ENCODE measurements at regions of chr7 and their contacts with region 1.

Region 1: DNA sequence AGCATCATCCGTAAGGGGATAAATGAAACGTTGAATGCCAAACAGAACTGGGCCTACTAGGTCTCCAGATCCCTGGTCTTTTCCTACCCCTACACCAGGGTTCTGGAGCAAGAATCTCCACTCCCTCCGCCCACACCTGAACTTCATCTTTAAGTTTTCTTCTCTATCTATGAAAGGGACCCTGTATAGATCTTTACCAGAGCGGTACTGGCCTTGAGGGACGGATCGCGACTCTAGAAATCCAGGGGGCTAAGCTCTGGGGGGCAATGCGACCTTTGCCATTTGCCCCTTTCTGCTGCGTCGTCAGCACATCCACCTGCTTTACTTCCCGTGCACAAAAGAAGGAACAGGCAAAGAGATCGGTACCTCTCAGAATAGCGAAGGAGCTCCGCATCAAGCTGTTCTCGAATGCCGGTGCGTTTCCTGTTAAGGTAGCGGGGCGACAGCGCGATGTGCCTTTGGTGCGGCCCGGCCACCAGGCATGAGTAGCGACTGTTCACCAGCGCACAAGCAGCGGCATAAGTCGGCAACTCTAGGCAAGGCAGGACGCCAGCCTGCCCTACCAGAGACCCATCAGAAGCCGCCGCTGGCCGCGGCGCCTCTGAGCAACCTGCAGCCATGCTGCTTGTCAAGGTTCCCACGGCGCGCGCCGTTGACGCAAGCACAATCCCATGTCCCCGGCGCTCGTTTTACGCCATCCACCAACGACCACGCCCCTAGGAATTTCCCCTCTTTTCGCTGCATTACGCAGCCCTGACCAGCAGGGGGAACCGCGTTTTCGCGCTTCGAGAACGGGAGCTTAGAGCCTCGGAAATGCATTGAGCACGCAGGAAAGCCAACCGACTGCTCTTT is at the start of gene POLR1F:
- DNase-seq: peak; percentile 83
- ATAC-seq: peak; percentile 98
- H3K4me3 Mint-ChIP-seq: peak within 1 kb of the TSS; percentile 97
- H3K27ac Mint-ChIP-seq: peak within 1 kb of the TSS; percentile 88
- H3K4me1 Mint-ChIP-seq: peaks cover 43% of the 10 kb centered on the region
- H3K27me3 Mint-ChIP-seq: peaks cover 4% of the 10 kb centered on the region
- CTCF ChIP-seq: no peak
- total RNA-seq, gene POLR1F: 19.9 and 20.0 TPM in 2 replicates

Region 2: GRCh38 chr7:19480383-19480782 is 228.2 kb before region 1 on chr7:
- CTCF ChIA-PET with region 1: no interaction called
- POLR2A ChIA-PET with region 1: no interaction called
- intact Hi-C with region 1: no loop called
- DNase-seq: no peak
- ATAC-seq: no peak
- H3K4me3 Mint-ChIP-seq: no peak overlapping the region
- H3K27ac Mint-ChIP-seq: no peak overlapping the region
- H3K4me1 Mint-ChIP-seq: no peaks in the 10 kb centered on the region
- H3K27me3 Mint-ChIP-seq: no peaks in the 10 kb centered on the region
- CTCF ChIP-seq: no peak

Region 3: DNA sequence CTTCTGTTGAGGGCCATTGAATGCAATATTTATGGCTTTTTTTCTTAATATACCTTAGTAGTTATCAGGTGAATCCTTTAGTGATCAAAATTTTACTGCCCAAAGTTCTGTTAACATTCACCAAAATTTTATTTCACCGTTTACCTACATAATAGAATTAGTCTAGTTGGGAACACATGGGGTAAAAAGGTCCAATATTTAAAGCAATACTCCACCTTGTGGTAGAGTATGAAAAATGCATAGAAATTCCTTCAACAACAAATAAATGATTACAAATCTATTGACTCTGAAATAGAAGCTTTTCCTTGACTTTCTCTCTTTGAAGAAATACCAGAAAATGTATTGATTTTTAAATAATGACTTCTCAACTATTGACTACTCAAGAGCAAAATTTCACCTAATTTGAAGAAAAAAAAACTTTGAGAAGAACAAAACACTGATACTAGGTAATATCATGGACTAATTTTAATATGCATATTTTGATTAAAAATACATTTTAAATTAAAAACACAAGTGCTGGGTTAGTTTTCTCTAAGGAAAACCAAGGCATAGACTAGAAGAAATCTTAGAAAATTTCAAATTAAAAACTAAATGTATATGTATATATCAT is 43.1 kb before region 1 on chr7:
- CTCF ChIA-PET with region 1: no interaction called
- POLR2A ChIA-PET with region 1: no interaction called
- intact Hi-C with region 1: loop called (anchors 1 kb)
- DNase-seq: no peak
- ATAC-seq: peak; percentile 32
- H3K4me3 Mint-ChIP-seq: no peak overlapping the region
- H3K27ac Mint-ChIP-seq: no peak overlapping the region
- H3K4me1 Mint-ChIP-seq: peaks cover 20% of the 10 kb centered on the region
- H3K27me3 Mint-ChIP-seq: no peaks in the 10 kb centered on the region
- CTCF ChIP-seq: no peak

Region 4: GRCh38 chr7:19692111-19692828 is 16.4 kb before region 1 on chr7:
- CTCF ChIA-PET with region 1: no interaction called
- POLR2A ChIA-PET with region 1: no interaction called
- intact Hi-C with region 1: no loop called
- DNase-seq: no peak
- ATAC-seq: no peak
- H3K4me3 Mint-ChIP-seq: no peak overlapping the region
- H3K27ac Mint-ChIP-seq: no peak overlapping the region
- H3K4me1 Mint-ChIP-seq: no peaks in the 10 kb centered on the region
- H3K27me3 Mint-ChIP-seq: peaks cover 3% of the 10 kb centered on the region
- CTCF ChIP-seq: no peak

Region 5: DNA sequence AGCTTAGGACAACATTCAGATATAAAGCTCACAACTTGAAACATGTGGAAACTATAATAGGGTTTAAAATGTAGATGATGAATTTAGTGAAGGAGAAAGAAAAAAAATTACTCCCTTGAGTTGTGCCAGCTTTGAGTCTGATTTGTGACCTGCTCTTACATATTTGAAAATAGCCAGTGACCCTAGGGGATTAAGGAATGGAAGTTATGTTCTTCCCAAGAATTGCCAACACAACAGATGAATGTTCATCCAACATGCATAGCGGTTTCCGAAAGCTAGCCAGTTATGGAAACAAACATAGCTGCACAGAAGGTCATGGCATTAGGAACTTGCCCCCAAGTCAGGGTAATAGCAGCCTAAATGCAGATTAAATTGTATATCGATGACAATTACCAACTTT is 54.0 kb after region 1 on chr7:
- CTCF ChIA-PET with region 1: no interaction called
- POLR2A ChIA-PET with region 1: no interaction called
- intact Hi-C with region 1: no loop called
- DNase-seq: no peak
- ATAC-seq: no peak
- H3K4me3 Mint-ChIP-seq: no peak overlapping the region
- H3K27ac Mint-ChIP-seq: no peak overlapping the region
- H3K4me1 Mint-ChIP-seq: no peaks in the 10 kb centered on the region
- H3K27me3 Mint-ChIP-seq: peaks cover 4% of the 10 kb centered on the region
- CTCF ChIP-seq: no peak

Region 6: DNA sequence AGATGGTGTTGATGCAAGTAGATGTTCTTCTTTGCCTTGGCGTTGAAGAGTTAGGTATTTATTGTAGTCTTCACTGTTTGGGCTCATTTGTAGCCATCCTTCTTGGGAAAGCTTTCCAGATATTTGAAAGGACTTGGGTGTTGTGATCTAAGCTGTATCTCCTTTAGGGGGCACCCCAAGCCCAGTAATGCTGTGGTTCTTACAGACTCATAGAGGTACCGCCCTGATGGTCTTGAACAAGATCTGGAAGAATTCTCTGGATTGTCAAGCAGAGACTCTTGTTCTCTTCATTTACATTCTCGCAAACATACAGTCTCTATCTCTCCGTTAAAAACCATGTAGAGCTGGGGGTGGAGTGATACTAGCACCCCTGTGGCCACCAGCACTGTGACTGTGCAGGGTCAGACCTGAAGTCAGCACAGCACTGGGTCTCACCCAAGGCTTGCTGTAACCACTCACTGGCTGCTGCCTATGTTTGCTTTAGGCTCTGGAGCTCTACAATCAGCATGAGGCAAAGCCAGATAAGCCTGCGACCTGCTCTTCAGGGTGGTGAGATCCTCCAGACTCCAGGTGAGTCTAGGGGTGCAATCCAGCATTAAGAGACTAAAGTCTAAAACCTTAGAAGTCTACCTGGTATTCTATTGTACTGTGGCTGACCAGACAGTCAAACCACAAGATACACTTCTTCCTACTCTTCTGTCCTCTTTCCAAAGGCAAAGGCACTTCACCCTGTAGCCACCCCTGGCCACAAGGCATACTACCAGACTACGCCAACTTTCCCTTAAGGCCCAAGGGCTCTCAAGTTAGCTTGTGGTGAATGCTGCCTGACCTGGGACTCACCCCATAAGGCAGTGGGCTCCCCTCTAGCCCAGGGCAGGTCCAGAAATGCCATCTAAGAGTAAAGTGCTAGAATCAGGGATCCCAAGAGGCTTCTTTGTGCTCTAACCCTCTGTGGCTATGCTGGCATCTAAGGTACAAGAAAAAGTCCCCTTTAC is 274.5 kb after region 1 on chr7:
- CTCF ChIA-PET with region 1: interaction called, 14 read pairs
- POLR2A ChIA-PET with region 1: no interaction called
- intact Hi-C with region 1: loop called (anchors 1 kb)
- DNase-seq: no peak
- ATAC-seq: peak; percentile 50
- H3K4me3 Mint-ChIP-seq: no peak overlapping the region
- H3K27ac Mint-ChIP-seq: no peak overlapping the region
- H3K4me1 Mint-ChIP-seq: no peaks in the 10 kb centered on the region
- H3K27me3 Mint-ChIP-seq: no peaks in the 10 kb centered on the region
- CTCF ChIP-seq: no peak

Region 7: DNA sequence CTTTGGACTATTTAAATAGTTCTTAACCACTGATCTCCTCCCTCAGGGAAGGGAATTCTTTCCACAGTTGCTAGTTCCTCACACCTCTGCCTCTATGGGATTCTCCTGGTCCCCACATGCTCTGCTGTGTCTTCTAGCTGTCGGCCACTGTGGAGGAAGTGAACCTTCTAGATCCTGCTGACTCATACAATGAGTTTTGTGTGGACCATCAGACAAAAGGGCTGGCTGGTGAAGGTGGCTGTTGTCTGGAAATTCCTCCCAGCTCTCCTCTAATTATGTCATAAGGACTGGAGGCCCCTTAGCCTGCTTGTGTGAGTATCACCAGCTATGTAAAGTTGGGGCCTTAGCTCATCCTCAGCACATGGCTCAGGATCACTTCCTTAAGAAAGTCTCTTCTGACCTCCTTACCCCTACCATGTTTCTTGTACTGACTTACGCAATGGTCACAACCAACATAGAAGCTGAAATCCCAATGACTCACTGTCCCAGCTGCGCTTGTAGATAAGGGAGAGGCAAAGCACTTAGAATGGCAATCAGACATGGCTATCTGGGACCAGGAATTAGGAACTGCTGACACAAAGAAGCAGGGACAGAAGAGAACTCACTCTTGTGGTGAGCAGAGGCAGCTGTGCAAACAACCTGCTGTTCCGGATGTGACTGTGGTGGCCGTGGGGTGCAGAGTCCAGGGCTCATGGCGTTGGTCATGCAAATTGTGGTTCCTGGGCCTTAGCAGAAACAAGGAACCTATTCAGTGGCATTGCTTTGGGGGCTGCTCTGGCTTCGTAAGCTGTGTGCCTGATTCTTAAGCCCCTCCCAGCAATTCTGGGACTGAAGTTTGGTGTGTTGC is 511.0 kb after region 1 on chr7:
- CTCF ChIA-PET with region 1: interaction called, 3 read pairs
- POLR2A ChIA-PET with region 1: no interaction called
- intact Hi-C with region 1: loop called (anchors 5 kb)
- DNase-seq: peak; percentile 65
- ATAC-seq: peak; percentile 73
- H3K4me3 Mint-ChIP-seq: peak overlapping the region; percentile 33
- H3K27ac Mint-ChIP-seq: peak overlapping the region; percentile 95
- H3K4me1 Mint-ChIP-seq: peaks cover 73% of the 10 kb centered on the region
- H3K27me3 Mint-ChIP-seq: no peaks in the 10 kb centered on the region
- CTCF ChIP-seq: no peak

Region 8: GRCh38 chr7:20310963-20311742 is 602.5 kb after region 1 on chr7:
- CTCF ChIA-PET with region 1: interaction called, 13 read pairs
- POLR2A ChIA-PET with region 1: no interaction called
- intact Hi-C with region 1: loop called (anchors 1 kb)
- DNase-seq: no peak
- ATAC-seq: peak; percentile 37
- H3K4me3 Mint-ChIP-seq: no peak overlapping the region
- H3K27ac Mint-ChIP-seq: peak overlapping the region; percentile 64
- H3K4me1 Mint-ChIP-seq: peaks cover 16% of the 10 kb centered on the region
- H3K27me3 Mint-ChIP-seq: no peaks in the 10 kb centered on the region
- CTCF ChIP-seq: peak; percentile 31

Region 9: DNA sequence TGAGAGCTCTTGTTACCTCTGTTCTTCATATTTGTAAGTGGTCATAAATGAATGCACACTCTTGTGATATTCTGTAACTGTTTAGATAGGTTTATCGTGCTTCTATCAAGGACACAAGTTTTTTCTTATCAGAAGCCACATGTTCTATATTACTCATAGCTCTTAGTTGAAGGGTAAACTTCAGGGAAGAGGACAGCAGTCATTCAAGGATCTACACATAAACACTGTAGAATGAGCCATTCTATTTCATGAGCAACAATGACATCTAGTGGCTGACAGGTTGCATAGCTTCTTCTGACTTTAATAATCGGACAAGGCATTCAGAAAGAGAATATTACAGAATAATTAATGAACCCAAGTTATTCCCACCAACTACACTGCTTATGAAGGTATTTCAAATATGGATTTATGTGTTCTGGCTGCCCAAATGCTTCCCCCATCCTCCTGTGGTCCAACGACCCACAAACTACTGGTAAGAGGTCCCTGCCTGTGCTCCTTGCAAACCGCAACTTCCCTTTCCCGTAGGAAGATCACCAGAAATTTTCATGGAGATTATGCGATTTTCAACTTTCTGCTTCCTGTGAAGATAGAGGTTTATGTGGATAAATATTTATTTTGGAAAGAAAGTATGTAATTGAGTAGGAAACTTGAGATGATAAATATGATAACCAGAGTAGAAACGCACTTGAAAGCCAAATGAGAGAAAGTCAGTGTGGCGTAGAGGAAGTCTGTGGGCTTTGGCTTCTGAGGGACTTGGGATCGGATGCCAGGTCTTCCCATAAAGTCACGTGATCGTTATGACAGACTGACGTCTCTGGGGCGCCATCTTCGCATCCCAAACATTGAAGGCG is 890.1 kb after region 1 on chr7:
- CTCF ChIA-PET with region 1: interaction called, 223 read pairs
- POLR2A ChIA-PET with region 1: interaction called, 6 read pairs
- intact Hi-C with region 1: loop called (anchors 1 kb)
- DNase-seq: no peak
- ATAC-seq: peak; percentile 75
- H3K4me3 Mint-ChIP-seq: no peak overlapping the region
- H3K27ac Mint-ChIP-seq: no peak overlapping the region
- H3K4me1 Mint-ChIP-seq: peaks cover 4% of the 10 kb centered on the region
- H3K27me3 Mint-ChIP-seq: peaks cover 21% of the 10 kb centered on the region
- CTCF ChIP-seq: peak; percentile 84

Region 10: GRCh38 chr7:21352540-21353387 is 1644.1 kb after region 1 on chr7:
- CTCF ChIA-PET with region 1: no interaction called
- POLR2A ChIA-PET with region 1: no interaction called
- intact Hi-C with region 1: loop called (anchors 2 kb)
- DNase-seq: no peak
- ATAC-seq: peak; percentile 84
- H3K4me3 Mint-ChIP-seq: peak overlapping the region; percentile 71
- H3K27ac Mint-ChIP-seq: peak overlapping the region; percentile 88
- H3K4me1 Mint-ChIP-seq: peaks cover 58% of the 10 kb centered on the region
- H3K27me3 Mint-ChIP-seq: no peaks in the 10 kb centered on the region
- CTCF ChIP-seq: no peak

Measured in activated B cell treated with CpG ODN at 0.5 μM for 24 hours (primary cell).